Mucosa of descending colon (tissue), 3 donors: ENCODE measurements at regions of chr18 and their contacts with region 1.

Region 1: GRCh38 chr18:66558773-66559172 is 45.1 kb downstream of the CDH19 start:
- DNase-seq: no peak
- ATAC-seq: no peak
- H3K4me3 ChIP-seq: no peak overlapping the region
- H3K4me1 ChIP-seq: no peaks in the 10 kb centered on the region
- CTCF ChIP-seq: no peak

Region 2: DNA sequence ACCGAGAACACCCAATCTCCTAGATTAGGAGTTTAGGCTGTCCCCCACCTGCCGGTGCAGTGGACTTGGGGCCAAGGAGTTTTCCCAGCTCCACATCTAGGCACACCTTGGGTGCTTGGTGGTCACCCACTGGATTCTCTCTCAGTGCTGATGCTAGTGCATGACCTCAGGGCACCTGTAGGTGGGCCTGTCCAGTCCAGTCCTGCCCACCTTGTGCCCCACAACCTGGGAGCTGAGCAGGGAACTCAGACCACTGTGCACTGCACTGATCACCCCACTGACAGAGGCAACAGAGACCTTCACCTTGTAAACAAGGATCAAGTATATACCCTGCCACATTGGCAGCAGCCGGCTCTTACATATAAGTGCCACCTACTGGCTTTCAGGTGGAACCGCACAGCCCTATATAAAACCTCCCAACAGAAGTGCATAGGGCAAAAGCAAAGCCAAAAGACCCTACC is 57.8 kb after region 1 on chr18:
- intact Hi-C with region 1: loop called in 1 of 2 experiments (anchors 10 kb)
- DNase-seq: peak in 2 of 3 donors; percentile 7 to 33
- ATAC-seq: peak; percentile 72
- H3K4me3 ChIP-seq: no peak overlapping the region
- H3K4me1 ChIP-seq: no peaks in the 10 kb centered on the region
- CTCF ChIP-seq: peak; percentile 32

Region 3: DNA sequence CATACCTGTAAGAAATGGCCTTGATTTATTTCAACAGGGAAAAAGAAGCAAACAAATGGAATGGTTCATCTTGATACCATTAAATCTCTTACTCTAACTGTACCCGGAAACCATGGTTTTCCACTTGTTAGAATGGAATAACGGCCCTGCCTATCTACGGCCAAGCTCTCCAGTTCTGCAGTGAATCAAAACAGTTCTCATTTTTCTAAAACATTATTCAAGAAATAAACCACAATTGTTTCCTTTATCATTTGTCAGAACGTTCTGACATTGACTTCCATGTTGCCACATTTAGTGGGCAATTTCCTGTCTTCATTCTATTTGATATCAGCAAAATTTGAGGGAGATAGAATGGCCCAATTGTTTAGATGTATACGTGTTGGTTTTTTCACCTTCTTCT is 163.9 kb after region 1 on chr18:
- intact Hi-C with region 1: no loop called
- DNase-seq: no peak
- ATAC-seq: no peak
- H3K4me3 ChIP-seq: no peak overlapping the region
- H3K4me1 ChIP-seq: peaks cover 6% of the 10 kb centered on the region
- CTCF ChIP-seq: no peak